ENCODE measurements at regions of chr4 and their contacts with region 1.

Region 1: DNA sequence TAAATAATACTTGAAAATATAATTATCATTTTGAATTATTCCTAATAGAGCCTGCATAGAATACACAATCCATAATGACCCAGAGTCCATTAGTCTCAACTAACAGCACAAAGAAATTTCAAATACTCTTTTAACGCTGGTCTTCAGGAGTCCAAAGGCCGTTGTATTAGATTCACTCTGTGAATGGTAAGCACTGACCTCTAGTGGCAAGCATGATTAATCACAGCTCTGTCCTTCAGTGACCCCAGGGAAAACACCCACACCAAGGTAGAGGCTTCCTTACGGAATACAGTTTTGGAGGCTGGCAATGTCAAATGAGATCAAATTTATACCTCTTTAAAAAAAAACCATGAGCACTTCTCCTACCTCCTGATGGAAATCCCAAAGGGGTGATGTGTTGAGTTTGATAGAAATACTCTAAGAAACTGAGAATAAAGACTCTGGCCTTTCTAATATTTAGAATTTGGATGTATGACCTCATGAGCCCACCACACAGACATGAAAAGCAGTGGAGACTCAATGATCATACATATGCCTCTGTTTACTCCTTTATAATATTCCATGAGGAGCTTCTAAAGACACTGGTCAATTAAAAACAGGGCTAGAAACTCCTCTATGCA is 147.2 kb upstream of the DKK2 start:
- DNase-seq: peak; percentile 3
- ATAC-seq: peak; percentile 99
- H3K4me3 ChIP-seq: no peak overlapping the region
- H3K27ac ChIP-seq: no peak overlapping the region
- H3K4me1 ChIP-seq: no peaks in the 10 kb centered on the region
- H3K27me3 ChIP-seq: no peaks in the 10 kb centered on the region
- CTCF ChIP-seq: peak; percentile 73 to 79 (median 78)
- EP300 ChIP-seq: no peak
- POLR2A ChIP-seq: no peak
- RAD21 ChIP-seq: peak; percentile 82

Region 2: DNA sequence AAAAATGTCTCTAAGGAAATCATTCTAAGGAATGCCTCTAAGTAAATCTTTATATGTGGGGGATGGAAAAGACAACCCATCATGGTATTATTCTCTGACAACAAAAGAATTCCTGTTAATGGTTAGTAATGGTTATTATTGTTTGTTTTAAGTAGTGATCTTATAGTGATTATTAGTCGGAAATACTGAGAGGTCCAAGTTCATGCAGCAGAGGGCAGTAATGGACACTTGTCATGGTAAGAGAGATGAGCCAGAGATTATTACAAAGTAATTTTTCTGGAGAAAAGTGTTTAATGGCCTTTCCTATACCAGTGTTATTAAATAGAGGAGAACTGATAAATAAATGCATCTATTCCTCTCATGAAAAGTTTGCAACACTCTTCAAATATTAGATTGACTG is 139.1 kb before region 1 on chr4:
- CTCF ChIA-PET with region 1: interaction called, 4 read pairs
- POLR2A ChIA-PET with region 1: no interaction called
- RAD21 ChIA-PET with region 1: no interaction called
- SMC1A ChIA-PET with region 1: no interaction called
- in situ Hi-C with region 1: no loop called
- intact Hi-C with region 1: loop called (anchors 2 kb)
- DNase-seq: no peak
- ATAC-seq: no peak
- H3K4me3 ChIP-seq: no peak overlapping the region
- H3K27ac ChIP-seq: no peak overlapping the region
- H3K4me1 ChIP-seq: no peaks in the 10 kb centered on the region
- H3K27me3 ChIP-seq: no peaks in the 10 kb centered on the region
- CTCF ChIP-seq: no peak; a peak in 1 of 6 replicates
- EP300 ChIP-seq: no peak
- POLR2A ChIP-seq: no peak
- RAD21 ChIP-seq: no peak

Region 3: GRCh38 chr4:107060388-107060787 is 122.9 kb before region 1 on chr4:
- CTCF ChIA-PET with region 1: no interaction called
- POLR2A ChIA-PET with region 1: no interaction called
- RAD21 ChIA-PET with region 1: no interaction called
- SMC1A ChIA-PET with region 1: no interaction called
- in situ Hi-C with region 1: no loop called
- intact Hi-C with region 1: no loop called
- DNase-seq: no peak
- ATAC-seq: no peak
- H3K4me3 ChIP-seq: no peak overlapping the region
- H3K27ac ChIP-seq: no peak overlapping the region
- H3K4me1 ChIP-seq: no peaks in the 10 kb centered on the region
- H3K27me3 ChIP-seq: no peaks in the 10 kb centered on the region
- CTCF ChIP-seq: no peak
- EP300 ChIP-seq: no peak
- POLR2A ChIP-seq: no peak
- RAD21 ChIP-seq: no peak

Region 4: DNA sequence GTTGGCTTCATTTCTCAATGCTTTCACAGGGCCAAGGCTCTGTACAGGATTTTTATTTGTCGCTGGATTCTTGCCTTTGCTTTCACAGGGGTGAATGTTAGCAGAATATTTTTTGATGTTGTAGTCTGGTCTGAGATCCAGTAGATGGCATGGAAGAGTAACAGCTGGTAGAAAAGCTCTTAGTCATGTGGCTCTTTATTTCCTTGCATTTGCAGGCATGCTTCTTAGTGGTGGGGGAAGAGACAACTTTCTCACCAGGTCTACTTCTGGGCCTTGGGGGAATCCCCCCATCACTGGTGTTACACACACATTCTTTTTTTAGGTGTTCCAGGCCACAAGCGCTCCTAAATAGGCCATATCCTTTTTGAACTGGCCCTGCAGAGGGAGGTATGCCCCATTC is 88.9 kb before region 1 on chr4:
- CTCF ChIA-PET with region 1: interaction called, 10 read pairs
- POLR2A ChIA-PET with region 1: no interaction called
- RAD21 ChIA-PET with region 1: interaction called, 3 read pairs
- SMC1A ChIA-PET with region 1: no interaction called
- in situ Hi-C with region 1: no loop called
- intact Hi-C with region 1: no loop called
- DNase-seq: no peak
- ATAC-seq: peak; percentile 87
- H3K4me3 ChIP-seq: no peak overlapping the region
- H3K27ac ChIP-seq: no peak overlapping the region
- H3K4me1 ChIP-seq: no peaks in the 10 kb centered on the region
- H3K27me3 ChIP-seq: no peaks in the 10 kb centered on the region
- CTCF ChIP-seq: peak; percentile 12 to 26 (median 19); a peak in 3 of 6 replicates
- EP300 ChIP-seq: no peak
- POLR2A ChIP-seq: no peak
- RAD21 ChIP-seq: peak; percentile 58

Region 5: DNA sequence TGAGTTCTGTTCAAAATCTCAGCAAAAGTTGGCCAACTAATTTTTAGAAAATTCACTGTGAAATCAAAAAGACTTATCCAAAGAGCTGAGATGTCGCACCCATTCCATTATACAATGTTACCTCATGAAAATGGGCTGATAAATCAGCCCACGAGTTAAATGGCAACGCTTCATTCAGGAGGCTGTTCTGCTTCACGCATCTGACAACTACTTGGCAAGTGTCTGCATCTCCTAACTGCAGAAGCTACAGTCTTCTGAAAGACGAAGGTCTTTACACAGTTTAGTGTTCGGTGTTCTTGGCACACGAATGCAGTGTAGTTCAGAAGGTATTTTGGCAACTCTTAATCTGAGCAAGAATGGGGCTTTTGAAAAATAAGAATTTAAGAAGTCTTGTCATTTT is 19.5 kb after region 1 on chr4:
- CTCF ChIA-PET with region 1: no interaction called
- POLR2A ChIA-PET with region 1: no interaction called
- RAD21 ChIA-PET with region 1: no interaction called
- SMC1A ChIA-PET with region 1: no interaction called
- in situ Hi-C with region 1: no loop called
- intact Hi-C with region 1: no loop called
- DNase-seq: no peak
- ATAC-seq: no peak
- H3K4me3 ChIP-seq: no peak overlapping the region
- H3K27ac ChIP-seq: no peak overlapping the region
- H3K4me1 ChIP-seq: no peaks in the 10 kb centered on the region
- H3K27me3 ChIP-seq: no peaks in the 10 kb centered on the region
- CTCF ChIP-seq: no peak
- EP300 ChIP-seq: no peak
- POLR2A ChIP-seq: no peak
- RAD21 ChIP-seq: no peak

Measured in GM12878 (cell line).